BJ (cell line): ENCODE measurements at regions of chr2 and their contacts with region 1.

Region 1: DNA sequence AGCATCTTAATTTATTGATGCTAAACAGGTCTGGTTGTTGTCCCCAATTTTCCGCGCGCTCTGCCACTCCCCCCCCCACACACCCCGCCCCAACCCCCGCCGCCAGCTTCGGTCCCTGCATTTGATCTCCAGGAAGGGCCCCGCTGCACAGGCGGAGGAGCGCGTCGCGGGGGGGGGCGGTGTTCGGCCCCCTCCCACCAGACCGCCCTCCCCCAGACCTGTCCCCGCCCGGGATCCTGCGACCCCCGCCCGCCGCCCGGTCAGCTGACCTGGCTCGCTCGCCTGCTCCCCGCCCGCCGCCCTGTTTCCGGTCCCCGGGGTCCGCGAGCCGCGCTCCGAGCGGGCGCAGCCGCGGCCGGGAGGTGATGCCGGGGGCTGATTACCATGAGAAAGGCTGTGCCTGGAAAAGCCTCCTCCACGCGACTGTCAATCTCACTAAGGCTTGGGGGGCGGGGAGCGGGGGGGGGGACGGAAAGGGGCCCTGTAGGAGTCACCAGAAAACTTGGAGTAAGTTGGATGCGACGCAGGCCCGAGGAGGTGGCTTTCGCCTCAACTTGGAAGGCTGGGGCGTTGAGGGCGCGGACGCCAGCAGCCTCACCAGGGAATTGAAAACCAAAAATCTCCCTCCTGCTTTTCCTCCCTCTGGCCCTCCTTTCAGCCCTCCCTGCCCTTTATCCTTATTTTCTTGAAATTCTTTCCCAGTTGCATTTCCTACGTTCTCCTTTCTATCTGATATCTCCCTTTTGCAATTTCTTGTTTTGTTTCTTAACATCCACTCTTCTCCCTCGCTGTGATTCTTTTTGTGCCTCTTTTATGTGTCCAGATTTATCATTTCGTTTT is 4.4 kb upstream of the ZEB2 start:
- DNase-seq: no peak
- H3K4me3 ChIP-seq: peak overlapping the region; percentile 49
- H3K27me3 ChIP-seq: no peaks in the 10 kb centered on the region
- CTCF ChIP-seq: no peak

Region 2: DNA sequence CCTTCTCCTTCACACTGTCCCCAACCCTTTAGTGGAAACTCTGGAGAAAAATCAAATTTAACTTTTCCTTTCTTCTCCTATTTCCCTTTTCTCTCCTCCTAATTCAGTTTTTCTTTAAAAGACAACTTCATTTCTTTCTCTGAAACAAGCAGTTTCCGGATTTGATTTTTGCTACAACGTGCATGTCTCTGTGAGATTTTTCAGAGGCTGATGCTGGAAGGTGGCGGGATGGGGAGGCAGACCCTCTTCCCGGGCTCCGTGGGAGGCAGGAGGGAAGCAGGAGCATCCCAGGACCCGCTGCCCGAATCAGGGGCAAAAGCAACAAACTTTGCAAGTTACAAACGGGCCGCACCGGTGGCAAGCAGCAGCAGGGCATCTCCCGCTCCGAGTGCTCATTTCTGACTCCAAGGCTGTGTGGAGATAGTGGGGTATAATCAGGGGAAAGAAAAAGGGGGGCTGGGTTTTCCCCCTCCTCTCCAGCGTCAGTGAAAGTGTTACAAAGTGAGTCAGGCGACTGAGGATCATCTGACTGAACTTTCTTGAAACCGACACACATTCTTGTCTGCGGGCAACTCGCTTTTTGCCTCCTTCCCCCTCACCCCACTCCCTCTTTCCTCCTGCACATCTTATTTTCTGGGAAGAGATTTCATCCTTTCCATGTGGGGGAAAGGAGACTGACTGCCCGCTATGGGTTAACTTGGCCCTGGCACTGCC is 10.8 kb before region 1 on chr2:
- CTCF ChIA-PET with region 1: interaction called, 3 read pairs
- POLR2A ChIA-PET with region 1: interaction called, 11 read pairs
- DNase-seq: no peak
- H3K4me3 ChIP-seq: peak overlapping the region; percentile 27
- H3K27me3 ChIP-seq: no peaks in the 10 kb centered on the region
- CTCF ChIP-seq: no peak